ENCODE measurements at regions of chr6 and their contacts with region 1.

Region 1: DNA sequence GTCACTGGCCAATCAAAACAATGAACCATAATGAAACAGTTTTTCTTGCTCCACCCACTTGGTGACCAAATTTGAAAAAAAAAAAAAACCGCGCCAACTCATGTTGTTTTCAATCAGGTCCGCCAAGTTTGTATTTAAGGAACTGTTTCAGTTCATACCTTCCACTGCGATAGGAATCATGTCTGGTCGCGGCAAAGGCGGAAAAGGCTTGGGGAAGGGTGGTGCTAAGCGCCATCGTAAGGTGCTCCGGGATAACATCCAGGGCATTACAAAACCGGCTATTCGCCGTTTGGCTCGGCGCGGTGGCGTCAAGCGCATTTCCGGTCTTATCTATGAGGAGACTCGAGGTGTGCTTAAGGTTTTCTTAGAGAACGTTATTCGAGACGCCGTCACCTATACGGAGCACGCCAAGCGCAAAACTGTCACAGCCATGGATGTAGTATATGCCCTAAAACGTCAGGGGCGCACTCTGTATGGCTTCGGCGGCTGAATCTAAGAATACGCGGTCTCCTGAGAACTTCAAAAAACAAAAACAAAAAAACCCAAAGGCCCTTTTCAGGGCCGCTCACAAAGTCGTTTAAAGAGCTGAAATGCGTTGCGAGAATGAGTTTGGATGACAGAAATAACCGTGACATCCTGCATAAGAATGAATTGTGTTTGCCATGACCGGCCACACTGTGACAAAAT is 16.7 kb downstream of the HFE start:
- DNase-seq: peak; percentile 96
- ATAC-seq: peak; percentile 84
- H3K4me3 ChIP-seq: peak overlapping the region; percentile 64 to 79 (median 74)
- H3K27ac ChIP-seq: peak overlapping the region; percentile 92
- H3K4me1 ChIP-seq: peaks cover 29% of the 10 kb centered on the region
- H3K27me3 ChIP-seq: no peaks in the 10 kb centered on the region; a peak in 1 of 5 replicates
- CTCF ChIP-seq: peak; percentile 45
- EP300 ChIP-seq: peak; percentile 69 to 96; a peak in 3 of 4 replicates
- POLR2A ChIP-seq: peak; percentile 98 to 99
- RAD21 ChIP-seq: peak; percentile 52; the same call in 1 of the 2 replicates

Region 2: DNA sequence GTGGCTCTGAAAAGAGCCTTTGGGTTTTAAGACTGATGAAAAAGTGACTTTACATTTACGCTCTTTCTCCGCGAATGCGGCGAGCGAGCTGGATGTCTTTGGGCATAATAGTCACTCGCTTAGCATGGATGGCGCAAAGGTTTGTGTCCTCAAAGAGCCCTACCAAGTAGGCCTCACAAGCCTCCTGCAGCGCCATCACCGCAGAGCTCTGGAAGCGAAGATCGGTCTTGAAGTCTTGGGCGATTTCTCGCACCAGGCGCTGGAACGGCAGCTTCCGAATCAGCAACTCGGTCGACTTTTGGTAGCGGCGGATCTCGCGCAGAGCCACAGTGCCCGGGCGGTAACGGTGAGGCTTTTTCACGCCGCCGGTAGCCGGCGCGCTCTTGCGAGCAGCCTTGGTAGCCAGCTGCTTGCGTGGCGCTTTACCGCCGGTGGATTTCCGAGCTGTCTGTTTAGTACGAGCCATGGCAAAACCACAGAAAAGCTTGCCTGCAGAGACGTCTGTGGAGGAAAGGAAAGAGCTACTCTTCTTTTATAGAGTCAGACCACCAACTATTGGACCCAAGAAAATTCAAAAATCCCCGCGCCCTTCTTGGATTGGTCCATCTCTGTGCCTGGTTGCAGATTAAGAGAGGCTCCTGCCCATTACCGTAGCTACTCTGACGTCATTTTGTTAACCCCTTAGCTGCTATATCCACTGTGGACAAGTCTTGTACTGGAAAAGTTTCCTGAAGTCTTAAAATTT is 72.1 kb before region 1 on chr6:
- CTCF ChIA-PET with region 1: no interaction called
- POLR2A ChIA-PET with region 1: interaction called, 43 read pairs
- in situ Hi-C with region 1: no loop called
- intact Hi-C with region 1: no loop called
- DNase-seq: peak; percentile 100
- ATAC-seq: peak; percentile 79
- H3K4me3 ChIP-seq: peak overlapping the region; percentile 71 to 83 (median 82)
- H3K27ac ChIP-seq: peak overlapping the region; percentile 93
- H3K4me1 ChIP-seq: peaks cover 37% of the 10 kb centered on the region
- H3K27me3 ChIP-seq: no peaks in the 10 kb centered on the region; a peak in 1 of 5 replicates
- CTCF ChIP-seq: peak; percentile 52
- EP300 ChIP-seq: peak; percentile 40 to 80; a peak in 2 of 4 replicates
- POLR2A ChIP-seq: peak; percentile 99
- RAD21 ChIP-seq: peak; percentile 61

Region 3: GRCh38 chr6:26054857-26055669 is 48.9 kb before region 1 on chr6:
- CTCF ChIA-PET with region 1: no interaction called
- POLR2A ChIA-PET with region 1: interaction called, 9 read pairs
- in situ Hi-C with region 1: loop called (anchors 5 kb)
- intact Hi-C with region 1: loop called (anchors 2 kb)
- DNase-seq: peak; percentile 97
- ATAC-seq: peak; percentile 82
- H3K4me3 ChIP-seq: peak overlapping the region; percentile 69 to 85 (median 85)
- H3K27ac ChIP-seq: peak overlapping the region; percentile 90
- H3K4me1 ChIP-seq: peaks cover 26% of the 10 kb centered on the region
- H3K27me3 ChIP-seq: no peaks in the 10 kb centered on the region; a peak in 1 of 5 replicates
- CTCF ChIP-seq: peak; percentile 32; the same call in 1 of the 2 replicates
- EP300 ChIP-seq: peak in 1 of 2 experiments; percentile 27; a peak in 1 of 4 replicates
- POLR2A ChIP-seq: peak; percentile 79 to 98; a peak in 3 of 4 replicates
- RAD21 ChIP-seq: peak; percentile 50

Region 4: GRCh38 chr6:26087284-26088115 is 16.4 kb before region 1 on chr6 and contains the start of gene HFE:
- CTCF ChIA-PET with region 1: no interaction called
- POLR2A ChIA-PET with region 1: interaction called, 15 read pairs
- in situ Hi-C with region 1: no loop called
- intact Hi-C with region 1: no loop called
- DNase-seq: peak; percentile 55
- ATAC-seq: peak; percentile 86
- H3K4me3 ChIP-seq: peak within 1 kb of the TSS; percentile 79 to 84 (median 84)
- H3K27ac ChIP-seq: peak within 1 kb of the TSS; percentile 72
- H3K4me1 ChIP-seq: peaks cover 31% of the 10 kb centered on the region
- H3K27me3 ChIP-seq: no peaks in the 10 kb centered on the region
- CTCF ChIP-seq: peak; percentile 24; the same call in 1 of the 2 replicates
- EP300 ChIP-seq: no peak
- POLR2A ChIP-seq: peak; percentile 20 to 55; a peak in 2 of 4 replicates
- RAD21 ChIP-seq: peak; percentile 9; the same call in 1 of the 2 replicates
- total RNA-seq, gene HFE: 1.9 and 3.7 TPM in 2 replicates

Region 5: DNA sequence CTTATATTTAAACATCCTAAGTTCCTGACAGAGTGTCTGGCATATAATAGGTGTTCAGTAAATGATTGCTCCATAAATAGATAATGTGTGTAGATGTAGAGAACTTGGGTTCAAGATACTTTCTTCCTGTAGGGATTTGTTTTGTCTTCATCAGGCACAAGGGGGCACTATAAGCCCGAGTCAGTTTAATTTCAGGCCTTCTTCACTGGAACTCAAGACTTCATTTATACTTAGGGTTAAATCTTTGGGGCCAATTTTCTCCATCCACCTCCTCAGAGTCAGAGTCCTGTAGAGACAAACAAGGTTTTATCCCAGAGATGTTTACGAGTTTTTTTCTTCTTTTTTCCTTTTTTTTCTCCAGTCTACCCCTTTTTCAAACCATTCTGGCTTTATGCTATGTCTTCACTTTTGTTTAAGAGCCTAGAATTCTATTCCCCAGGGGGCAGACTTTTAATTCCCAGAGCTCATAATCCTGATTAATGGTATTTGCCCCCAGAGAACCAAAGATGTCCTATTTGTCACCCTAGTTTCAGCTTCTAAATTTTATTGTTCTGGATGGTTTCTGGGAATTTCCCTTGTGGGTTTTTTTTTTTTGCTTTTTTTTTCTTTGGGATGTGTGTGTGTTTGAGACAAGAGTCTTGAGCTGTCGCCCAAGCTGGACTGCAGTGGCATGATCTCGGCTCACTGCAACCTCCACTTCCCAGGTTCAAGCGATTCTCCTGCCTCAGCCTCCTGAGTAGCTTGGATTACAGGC is 71.7 kb after region 1 on chr6:
- CTCF ChIA-PET with region 1: no interaction called
- POLR2A ChIA-PET with region 1: no interaction called
- in situ Hi-C with region 1: no loop called
- intact Hi-C with region 1: no loop called
- DNase-seq: peak; percentile 72
- ATAC-seq: peak; percentile 55
- H3K4me3 ChIP-seq: no peak overlapping the region
- H3K27ac ChIP-seq: no peak overlapping the region
- H3K4me1 ChIP-seq: peaks cover 12% of the 10 kb centered on the region
- H3K27me3 ChIP-seq: no peaks in the 10 kb centered on the region
- CTCF ChIP-seq: peak; percentile 79
- EP300 ChIP-seq: no peak
- POLR2A ChIP-seq: no peak
- RAD21 ChIP-seq: peak; percentile 76